ENCODE measurements at regions of chr1 and their contacts with region 1.

Region 1: GRCh38 chr1:62082456-62083363 is 111.9 kb upstream of the L1TD1 start:
- DNase-seq: peak; percentile 38
- ATAC-seq: peak; percentile 45
- H3K4me3 ChIP-seq: no peak overlapping the region
- H3K4me3 Mint-ChIP-seq: no peak overlapping the region
- H3K27ac ChIP-seq: no peak overlapping the region
- H3K27ac Mint-ChIP-seq: no peak overlapping the region
- H3K4me1 ChIP-seq: no peaks in the 10 kb centered on the region
- H3K4me1 Mint-ChIP-seq: no peaks in the 10 kb centered on the region
- H3K27me3 ChIP-seq: no peaks in the 10 kb centered on the region
- H3K27me3 Mint-ChIP-seq: no peaks in the 10 kb centered on the region
- CTCF ChIP-seq: peak; percentile 95

Region 2: GRCh38 chr1:62093261-62093660 is 10.6 kb after region 1 on chr1:
- CTCF ChIA-PET with region 1: interaction called, 21 read pairs
- POLR2A ChIA-PET with region 1: no interaction called
- intact Hi-C with region 1: no loop called
- DNase-seq: no peak
- ATAC-seq: no peak
- H3K4me3 ChIP-seq: no peak overlapping the region
- H3K4me3 Mint-ChIP-seq: no peak overlapping the region
- H3K27ac ChIP-seq: no peak overlapping the region
- H3K27ac Mint-ChIP-seq: no peak overlapping the region
- H3K4me1 ChIP-seq: no peaks in the 10 kb centered on the region
- H3K4me1 Mint-ChIP-seq: no peaks in the 10 kb centered on the region
- H3K27me3 ChIP-seq: no peaks in the 10 kb centered on the region
- H3K27me3 Mint-ChIP-seq: no peaks in the 10 kb centered on the region
- CTCF ChIP-seq: no peak

Region 3: DNA sequence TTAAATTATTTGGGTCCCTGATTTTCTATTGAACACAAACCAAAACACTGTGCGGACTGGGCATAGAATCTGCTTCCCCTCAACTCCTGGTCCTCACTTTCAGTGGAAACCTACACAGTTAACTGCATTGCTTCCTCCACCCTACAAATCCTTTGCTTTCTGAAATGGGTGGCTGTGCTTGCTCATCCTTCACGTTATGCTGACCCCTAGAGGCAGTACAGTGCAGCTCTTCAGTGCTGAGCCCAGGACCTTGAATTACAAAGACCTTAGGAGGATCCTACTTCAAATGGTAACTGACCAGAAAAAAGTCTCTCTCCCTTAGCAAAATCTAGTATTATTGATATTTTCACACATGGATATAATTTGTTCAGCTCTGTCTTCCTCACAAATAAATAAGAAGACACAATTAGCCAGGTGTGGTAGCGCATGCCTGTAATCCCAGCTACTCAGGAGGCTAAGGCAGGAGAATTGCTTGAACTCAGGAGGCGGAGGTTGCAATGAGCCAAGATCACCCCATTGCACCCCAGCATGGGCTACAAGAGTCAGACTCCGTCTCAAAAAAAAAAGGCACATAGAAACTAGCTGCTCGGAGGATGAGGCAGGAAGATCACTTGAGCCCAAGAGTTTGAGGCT is 48.5 kb after region 1 on chr1:
- CTCF ChIA-PET with region 1: interaction called, 9 read pairs
- POLR2A ChIA-PET with region 1: no interaction called
- intact Hi-C with region 1: loop called (anchors 1 kb)
- DNase-seq: peak; percentile 15
- ATAC-seq: peak; percentile 51
- H3K4me3 ChIP-seq: no peak overlapping the region
- H3K4me3 Mint-ChIP-seq: no peak overlapping the region
- H3K27ac ChIP-seq: no peak overlapping the region
- H3K27ac Mint-ChIP-seq: no peak overlapping the region
- H3K4me1 ChIP-seq: no peaks in the 10 kb centered on the region
- H3K4me1 Mint-ChIP-seq: no peaks in the 10 kb centered on the region
- H3K27me3 ChIP-seq: no peaks in the 10 kb centered on the region
- H3K27me3 Mint-ChIP-seq: no peaks in the 10 kb centered on the region
- CTCF ChIP-seq: peak; percentile 63

Region 4: GRCh38 chr1:62144238-62144831 is 61.6 kb after region 1 on chr1:
- CTCF ChIA-PET with region 1: interaction called, 12 read pairs
- POLR2A ChIA-PET with region 1: interaction called, 3 read pairs
- intact Hi-C with region 1: no loop called
- DNase-seq: peak; percentile 37
- ATAC-seq: no peak
- H3K4me3 ChIP-seq: no peak overlapping the region
- H3K4me3 Mint-ChIP-seq: no peak overlapping the region
- H3K27ac ChIP-seq: no peak overlapping the region
- H3K27ac Mint-ChIP-seq: no peak overlapping the region
- H3K4me1 ChIP-seq: no peaks in the 10 kb centered on the region
- H3K4me1 Mint-ChIP-seq: peaks cover 3% of the 10 kb centered on the region
- H3K27me3 ChIP-seq: no peaks in the 10 kb centered on the region
- H3K27me3 Mint-ChIP-seq: no peaks in the 10 kb centered on the region
- CTCF ChIP-seq: peak; percentile 71

Region 5: DNA sequence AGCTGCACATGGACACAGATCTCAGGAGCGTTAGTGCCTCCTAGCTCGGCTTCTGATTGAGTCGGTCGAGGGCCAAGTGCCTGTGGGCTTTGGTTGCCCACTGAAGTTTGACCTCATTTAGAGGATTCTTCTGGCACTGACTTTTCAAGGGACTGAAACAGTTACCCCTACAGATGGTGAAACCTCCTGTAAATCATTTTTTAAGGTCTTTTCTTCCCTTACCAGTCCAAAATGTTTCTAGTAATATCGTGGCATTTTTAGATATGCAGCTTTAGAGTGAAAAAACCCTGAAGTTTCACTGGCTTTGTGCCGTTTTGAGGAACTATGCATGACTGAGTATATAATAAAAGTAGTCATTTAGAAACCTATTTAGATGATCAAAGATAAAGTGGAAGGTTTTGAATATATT is 77.2 kb after region 1 on chr1:
- CTCF ChIA-PET with region 1: no interaction called
- POLR2A ChIA-PET with region 1: no interaction called
- intact Hi-C with region 1: no loop called
- DNase-seq: no peak
- ATAC-seq: no peak
- H3K4me3 ChIP-seq: no peak overlapping the region
- H3K4me3 Mint-ChIP-seq: no peak overlapping the region
- H3K27ac ChIP-seq: no peak overlapping the region
- H3K27ac Mint-ChIP-seq: peak overlapping the region; percentile 2
- H3K4me1 ChIP-seq: peaks cover 5% of the 10 kb centered on the region in 2 donors
- H3K4me1 Mint-ChIP-seq: peaks cover 9% of the 10 kb centered on the region
- H3K27me3 ChIP-seq: no peaks in the 10 kb centered on the region
- H3K27me3 Mint-ChIP-seq: no peaks in the 10 kb centered on the region
- CTCF ChIP-seq: no peak

Region 6: DNA sequence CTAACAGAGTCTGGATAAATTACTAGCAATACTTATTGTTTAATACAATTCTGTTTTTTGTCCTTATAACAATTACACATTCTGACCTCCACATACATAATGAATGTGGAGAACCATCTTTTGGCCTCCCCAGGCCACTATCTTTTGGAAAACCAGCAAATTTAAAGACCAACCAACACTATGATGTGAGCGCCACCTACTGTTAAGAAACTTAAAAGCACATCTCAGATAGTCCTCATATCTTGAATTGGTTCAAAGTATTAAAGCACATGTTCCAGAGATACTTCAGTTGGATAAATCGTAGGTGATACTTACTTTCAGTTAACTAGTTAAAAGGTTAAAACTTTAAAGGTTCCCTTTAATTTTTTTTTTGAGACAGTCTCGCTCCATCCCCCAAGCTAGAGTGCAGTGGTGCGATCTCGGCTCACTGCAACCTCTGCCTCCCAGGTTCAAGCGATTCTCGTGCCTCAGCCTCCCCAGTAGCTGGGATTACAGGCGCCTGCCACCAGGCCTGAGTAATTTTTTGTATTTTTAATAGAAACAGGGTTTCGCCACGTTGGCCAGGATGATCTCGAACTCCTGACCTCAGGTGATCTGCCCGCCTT is 324.8 kb after region 1 on chr1:
- CTCF ChIA-PET with region 1: interaction called, 6 read pairs
- POLR2A ChIA-PET with region 1: no interaction called
- intact Hi-C with region 1: loop called (anchors 2 kb)
- DNase-seq: peak; percentile 52
- ATAC-seq: no peak
- H3K4me3 ChIP-seq: no peak overlapping the region
- H3K4me3 Mint-ChIP-seq: no peak overlapping the region
- H3K27ac ChIP-seq: no peak overlapping the region
- H3K27ac Mint-ChIP-seq: no peak overlapping the region
- H3K4me1 ChIP-seq: no peaks in the 10 kb centered on the region
- H3K4me1 Mint-ChIP-seq: no peaks in the 10 kb centered on the region
- H3K27me3 ChIP-seq: no peaks in the 10 kb centered on the region
- H3K27me3 Mint-ChIP-seq: no peaks in the 10 kb centered on the region
- CTCF ChIP-seq: peak; percentile 86

Measured in B cell (primary cell).